ENCODE measurements at regions of chr2 and their contacts with region 1.

Region 1: DNA sequence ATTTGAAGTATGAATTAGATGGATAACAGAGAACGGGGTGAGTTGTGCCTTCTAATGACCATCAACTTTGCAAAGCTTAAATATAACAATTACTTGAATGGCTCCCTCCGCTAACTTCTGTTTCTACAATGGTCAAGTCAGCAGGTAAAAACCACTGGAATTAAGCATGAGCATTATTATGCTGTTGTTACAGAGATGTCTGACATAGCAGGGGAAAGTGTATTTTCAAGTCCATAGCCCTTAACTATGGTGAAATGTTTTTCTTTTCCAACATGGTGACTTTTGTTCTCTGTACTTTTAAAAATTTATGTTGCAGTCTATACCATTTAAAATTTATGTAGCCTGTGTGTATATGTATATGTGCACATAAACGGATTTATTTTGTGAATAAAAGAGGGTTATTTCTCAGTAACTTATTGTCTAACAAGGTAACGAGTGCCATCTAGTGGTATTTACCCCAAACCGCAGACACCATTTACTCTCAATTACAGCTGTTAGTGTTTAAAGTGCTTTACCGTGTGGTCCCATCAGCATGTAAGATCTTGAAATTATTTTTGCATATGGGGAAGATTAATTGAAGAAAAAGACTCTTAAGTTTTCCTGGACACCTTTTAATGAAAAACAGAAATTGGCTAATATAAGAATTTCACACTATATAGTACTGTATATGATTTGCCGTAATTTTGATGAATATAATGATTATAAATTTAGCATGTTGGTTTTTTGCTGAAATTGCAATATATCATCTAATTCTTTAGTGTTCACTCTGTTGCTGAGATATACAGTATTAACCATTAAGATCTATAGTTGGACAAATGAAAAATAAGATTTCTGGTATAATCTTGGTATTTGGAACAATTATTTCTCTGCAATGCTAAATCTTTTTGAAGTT is 78.2 kb downstream of the UBE2E3 start:
- DNase-seq: no peak
- H3K4me3 Mint-ChIP-seq: no peak overlapping the region
- H3K27ac Mint-ChIP-seq: no peak overlapping the region
- H3K4me1 Mint-ChIP-seq: peaks cover 13% of the 10 kb centered on the region
- H3K27me3 Mint-ChIP-seq: no peaks in the 10 kb centered on the region

Region 2: DNA sequence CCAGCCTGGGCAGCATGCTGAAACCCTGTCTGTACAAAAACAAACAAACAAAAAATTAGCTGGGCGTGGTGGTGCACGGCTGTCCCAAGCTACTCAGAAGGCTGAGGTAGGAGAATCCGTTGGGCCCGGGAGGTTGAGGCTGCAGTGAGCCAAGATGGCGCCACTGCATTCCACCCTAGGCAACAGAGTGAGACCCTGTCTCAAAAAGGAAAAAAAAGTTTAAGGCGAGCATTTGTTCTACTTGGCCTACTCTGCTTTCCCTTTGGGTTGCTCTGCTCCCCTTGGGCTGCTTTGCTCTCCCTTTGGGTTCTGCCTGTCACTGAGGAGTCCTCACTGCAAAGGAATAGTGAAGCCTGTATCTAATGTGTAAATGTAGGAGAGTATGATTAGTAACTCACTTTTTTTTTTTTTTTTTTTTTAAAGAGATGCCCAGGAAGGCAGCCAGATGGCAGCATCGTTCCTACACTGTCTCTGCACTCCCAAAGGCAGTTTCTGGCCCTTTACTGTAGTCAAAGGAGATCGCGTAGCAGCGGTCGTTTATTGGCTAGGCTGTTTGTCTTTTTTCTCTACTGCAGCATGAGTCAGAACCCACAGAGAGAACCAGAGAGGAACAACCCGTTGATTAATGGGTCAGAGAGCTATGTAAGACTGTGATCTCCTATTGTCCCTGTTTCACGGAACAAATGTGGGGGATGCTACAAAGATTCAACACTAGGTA is 933.2 kb before region 1 on chr2:
- intact Hi-C with region 1: loop called (anchors 1 kb)
- DNase-seq: peak; percentile 6
- H3K4me3 Mint-ChIP-seq: no peak overlapping the region
- H3K27ac Mint-ChIP-seq: no peak overlapping the region
- H3K4me1 Mint-ChIP-seq: no peaks in the 10 kb centered on the region
- H3K27me3 Mint-ChIP-seq: peaks cover 11% of the 10 kb centered on the region

Region 3: GRCh38 chr2:180604077-180604476 is 454.5 kb before region 1 on chr2:
- intact Hi-C with region 1: loop called (anchors 2 kb)
- DNase-seq: no peak
- H3K4me3 Mint-ChIP-seq: no peak overlapping the region
- H3K27ac Mint-ChIP-seq: no peak overlapping the region
- H3K4me1 Mint-ChIP-seq: no peaks in the 10 kb centered on the region
- H3K27me3 Mint-ChIP-seq: peaks cover 2% of the 10 kb centered on the region

Region 4: GRCh38 chr2:180776921-180777320 is 281.7 kb before region 1 on chr2:
- intact Hi-C with region 1: loop called (anchors 10 kb)
- DNase-seq: no peak
- H3K4me3 Mint-ChIP-seq: no peak overlapping the region
- H3K27ac Mint-ChIP-seq: no peak overlapping the region
- H3K4me1 Mint-ChIP-seq: no peaks in the 10 kb centered on the region
- H3K27me3 Mint-ChIP-seq: peaks cover 2% of the 10 kb centered on the region

Measured in activated T-helper 1 cell treated with anti-CD3 and anti-CD28 coated beads, Interleukin-12 subunit alpha, Interleukin-12 subunit beta, Interleukin-2, Interleukin-4 antibody, amounts not matched to agents 30 ng/mL and 10 ng/mL and 1 ng/mL, durations not matched to agents 14 hours and 24 hours and 36 hours (primary cell).